ENCODE measurements at regions of chr6 and their contacts with region 1.

Region 1: DNA sequence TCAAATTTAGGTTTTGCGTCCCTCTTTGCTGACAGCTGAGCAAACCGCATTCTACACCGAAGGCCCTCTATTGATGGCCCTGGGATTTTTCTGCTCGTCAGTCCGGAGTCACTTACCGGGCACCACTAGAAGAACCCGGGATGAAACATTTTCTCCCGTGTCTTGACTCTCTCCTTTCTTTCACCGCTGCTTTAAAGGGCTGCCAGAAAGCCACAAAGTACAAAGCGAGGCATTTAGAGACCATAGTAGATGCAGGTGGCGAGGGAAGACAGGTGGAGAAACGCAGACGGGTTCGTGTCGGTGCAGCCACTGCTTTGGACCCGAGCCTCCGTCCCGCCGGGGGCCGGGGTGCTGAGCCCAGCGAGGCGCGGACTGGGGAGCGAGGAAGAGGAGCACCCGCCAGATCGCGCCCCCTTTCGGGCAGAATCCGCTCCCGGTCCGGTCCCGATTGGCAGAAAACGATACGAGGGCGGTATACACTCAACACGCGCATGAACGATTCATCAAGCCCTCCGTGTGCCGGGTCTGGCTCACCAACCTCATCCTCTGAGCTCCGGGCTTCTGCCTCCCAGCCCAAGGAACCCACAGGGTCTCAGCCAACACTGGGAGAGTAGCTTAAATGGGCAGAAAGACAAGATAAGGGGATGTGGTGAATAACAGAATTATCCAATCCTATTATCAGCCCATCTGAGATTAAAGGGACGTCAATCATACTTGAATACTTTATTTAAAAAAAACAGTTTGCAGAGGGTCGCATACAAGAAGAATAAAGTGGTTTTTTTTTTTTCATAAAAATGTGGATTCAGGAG is 84.9 kb downstream of the TRIM27 start:
- DNase-seq: peak; percentile 77 to 92
- H3K4me3 ChIP-seq: peak overlapping the region; percentile 60 to 68 (median 63)
- H3K27ac ChIP-seq: peak overlapping the region; percentile 67 to 84 (median 75)
- H3K4me1 ChIP-seq: peaks cover 0 to 28% (median 22%) of the 10 kb centered on the region in 4 donors
- H3K27me3 ChIP-seq: peaks cover 0 to 53% (median 14%) of the 10 kb centered on the region in 3 donors
- CTCF ChIP-seq: peak in 5 of 7 experiments; percentile 27 to 57 (median 40)
- EP300 ChIP-seq: no peak
- POLR2A ChIP-seq: no peak

Region 2: DNA sequence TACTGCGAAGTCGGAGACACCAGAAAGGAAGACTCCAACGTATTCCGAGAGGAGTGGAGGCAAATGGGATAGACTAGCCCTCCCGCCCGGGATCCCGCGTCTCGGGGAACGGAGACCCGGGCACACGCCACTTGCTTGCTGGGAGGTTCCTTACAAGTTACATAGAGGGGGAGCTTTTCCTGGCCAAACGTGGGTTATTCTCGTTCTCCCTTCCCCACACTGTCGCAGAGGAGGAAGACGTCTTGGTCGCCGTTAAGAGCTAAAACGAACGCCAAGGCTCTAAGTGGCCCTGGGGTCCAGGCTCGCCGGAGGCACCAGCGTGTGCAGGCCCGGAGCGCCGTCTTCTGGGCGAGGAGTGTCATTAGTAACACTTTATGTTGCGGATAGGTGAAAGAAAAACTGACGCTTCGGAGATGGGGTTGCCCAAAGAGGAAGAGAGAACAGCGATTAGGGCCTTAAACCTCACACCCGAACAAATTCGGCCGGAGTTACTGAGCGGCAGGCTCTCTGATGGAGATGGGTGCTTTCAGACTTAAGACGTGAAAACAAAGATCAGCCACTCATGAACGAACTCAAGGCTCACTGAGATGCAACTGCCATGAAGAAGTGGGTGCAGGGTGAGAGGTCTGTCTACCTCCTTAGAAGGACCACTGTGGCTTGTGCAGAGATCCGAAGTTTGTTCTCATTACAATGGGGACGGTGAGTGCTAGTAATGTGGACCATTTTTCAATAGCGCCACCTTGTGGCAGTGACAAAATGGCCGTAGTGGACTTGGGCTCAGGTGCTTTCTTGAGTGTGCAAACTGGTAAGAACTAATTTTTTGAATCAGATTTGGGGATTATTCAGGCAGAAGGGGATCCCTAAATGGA is 178.0 kb after region 1 on chr6:
- intact Hi-C with region 1: loop called (anchors 10 kb)
- DNase-seq: peak; percentile 88 to 93
- H3K4me3 ChIP-seq: peak overlapping the region; percentile 46 to 61 (median 54)
- H3K27ac ChIP-seq: peak overlapping the region in 2 of 5 donors; percentile 22 to 45
- H3K4me1 ChIP-seq: peaks cover 0 to 20% (median 12%) of the 10 kb centered on the region in 4 donors
- H3K27me3 ChIP-seq: peaks cover 5 to 33% (median 19%) of the 10 kb centered on the region in 3 donors
- CTCF ChIP-seq: peak in 5 of 7 experiments; percentile 66 to 94 (median 83)
- EP300 ChIP-seq: no peak
- POLR2A ChIP-seq: no peak

Measured in stomach (tissue), 19 donors.